Panc1 (cell line): ENCODE measurements at regions of chr7 and their contacts with region 1.

Region 1: GRCh38 chr7:54215424-54215823 is 326.8 kb upstream of the VSTM2A start:
- DNase-seq: no peak
- ATAC-seq: no peak
- H3K4me3 ChIP-seq: no peak overlapping the region
- H3K27ac ChIP-seq: no peak overlapping the region
- H3K4me1 ChIP-seq: no peaks in the 10 kb centered on the region
- H3K27me3 ChIP-seq: no peaks in the 10 kb centered on the region
- CTCF ChIP-seq: no peak

Region 2: GRCh38 chr7:54076616-54077015 is 138.8 kb before region 1 on chr7:
- CTCF ChIA-PET with region 1: no interaction called
- POLR2A ChIA-PET with region 1: no interaction called
- in situ Hi-C with region 1: no loop called
- intact Hi-C with region 1: no loop called
- DNase-seq: no peak
- ATAC-seq: no peak
- H3K4me3 ChIP-seq: no peak overlapping the region
- H3K27ac ChIP-seq: no peak overlapping the region
- H3K4me1 ChIP-seq: no peaks in the 10 kb centered on the region
- H3K27me3 ChIP-seq: no peaks in the 10 kb centered on the region
- CTCF ChIP-seq: no peak

Region 3: DNA sequence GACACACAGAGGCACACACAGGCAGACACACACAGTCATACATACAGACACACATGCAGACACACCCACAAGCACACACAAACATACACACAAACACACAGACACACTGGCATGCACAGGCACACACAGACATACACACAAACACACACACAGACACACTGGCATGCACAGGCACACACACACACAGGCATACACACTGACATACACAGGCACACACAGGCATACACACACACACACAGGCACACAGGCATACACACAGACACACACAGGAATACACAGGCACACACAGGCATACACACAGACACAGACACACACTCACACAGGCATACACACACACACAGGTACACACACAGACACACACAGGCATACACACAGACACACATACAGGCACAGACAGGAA is 13.9 kb before region 1 on chr7:
- CTCF ChIA-PET with region 1: no interaction called
- POLR2A ChIA-PET with region 1: no interaction called
- in situ Hi-C with region 1: no loop called
- intact Hi-C with region 1: loop called (anchors 1 kb)
- DNase-seq: no peak
- ATAC-seq: no peak
- H3K4me3 ChIP-seq: no peak overlapping the region
- H3K27ac ChIP-seq: no peak overlapping the region
- H3K4me1 ChIP-seq: no peaks in the 10 kb centered on the region
- H3K27me3 ChIP-seq: no peaks in the 10 kb centered on the region
- CTCF ChIP-seq: no peak